Sigmoid colon (tissue), 7 donors: ENCODE measurements at regions of chr21 and their contacts with region 1.

Region 1: DNA sequence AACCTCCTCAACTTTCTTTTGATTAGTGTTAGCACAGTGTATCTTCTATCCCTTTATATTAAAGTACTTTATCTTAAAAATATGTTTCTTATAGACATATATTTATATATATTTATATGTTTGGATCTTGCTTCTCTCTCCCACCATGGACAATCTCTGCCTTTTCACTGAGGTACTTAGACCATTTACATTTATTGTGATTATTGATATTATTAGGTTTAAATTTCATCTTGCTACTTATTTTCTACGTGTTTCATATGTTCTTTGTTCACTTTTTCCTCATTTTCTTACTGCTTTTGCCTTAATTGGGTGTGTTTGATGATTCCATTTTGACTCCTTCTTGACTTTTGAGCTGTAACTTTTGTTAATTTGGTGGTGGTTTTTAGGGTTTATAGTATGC is 70.7 kb downstream of the POFUT2 start:
- DNase-seq: no peak
- H3K4me3 ChIP-seq: no peak overlapping the region
- H3K27ac ChIP-seq: no peak overlapping the region
- H3K4me1 ChIP-seq: no peaks in the 10 kb centered on the region
- H3K27me3 ChIP-seq: no peaks in the 10 kb centered on the region
- CTCF ChIP-seq: no peak
- EP300 ChIP-seq: no peak
- POLR2A ChIP-seq: no peak

Region 2: DNA sequence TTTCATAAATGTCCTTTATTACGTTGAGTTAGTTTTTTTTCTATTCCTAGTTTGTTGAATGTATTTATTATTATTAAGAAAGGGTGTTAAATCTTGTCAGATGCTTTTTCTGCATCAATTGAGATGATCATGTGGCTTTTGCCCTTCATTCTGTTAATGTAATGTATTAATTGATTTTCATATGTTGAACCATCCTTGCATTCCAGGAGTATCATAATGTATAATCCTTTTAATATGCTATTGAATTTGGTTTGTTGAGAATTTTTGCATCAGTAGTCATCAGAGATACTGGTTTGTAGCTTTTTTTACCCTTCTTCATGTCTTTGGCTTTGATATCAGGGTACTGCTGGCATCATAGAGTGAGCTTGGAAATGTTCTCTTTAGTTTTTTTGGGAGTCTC is 29.4 kb before region 1 on chr21:
- intact Hi-C with region 1: loop called (anchors 2 kb)
- DNase-seq: no peak
- H3K4me3 ChIP-seq: no peak overlapping the region
- H3K27ac ChIP-seq: no peak overlapping the region
- H3K4me1 ChIP-seq: peaks cover 0 to 8% (median 4%) of the 10 kb centered on the region in 4 donors
- H3K27me3 ChIP-seq: no peaks in the 10 kb centered on the region
- CTCF ChIP-seq: no peak
- EP300 ChIP-seq: no peak
- POLR2A ChIP-seq: no peak